Kidney (tissue), 22 donors: ENCODE measurements at regions of chr14 and their contacts with region 1.

Region 1: GRCh38 chr14:51776102-51776894 is 84.1 kb upstream of the GNG2 start:
- DNase-seq: peak in 4 of 5 donors; percentile 60 to 86 (median 73)
- H3K4me3 ChIP-seq: no peak overlapping the region
- H3K27ac ChIP-seq: no peak overlapping the region
- H3K4me1 ChIP-seq: no peaks in the 10 kb centered on the region
- H3K27me3 ChIP-seq: no peaks in the 10 kb centered on the region
- CTCF ChIP-seq: peak; percentile 47

Region 2: GRCh38 chr14:51283402-51284085 is 492.8 kb before region 1 on chr14:
- intact Hi-C with region 1: loop called (anchors 10 kb)
- DNase-seq: peak in 3 of 5 donors; percentile 18 to 94 (median 93)
- H3K4me3 ChIP-seq: no peak overlapping the region
- H3K27ac ChIP-seq: no peak overlapping the region
- H3K4me1 ChIP-seq: no peaks in the 10 kb centered on the region
- H3K27me3 ChIP-seq: no peaks in the 10 kb centered on the region
- CTCF ChIP-seq: peak; percentile 62

Region 3: GRCh38 chr14:51616724-51617409 is 159.4 kb before region 1 on chr14:
- intact Hi-C with region 1: no loop called
- DNase-seq: peak in 3 of 5 donors; percentile 17 to 64 (median 57)
- H3K4me3 ChIP-seq: no peak overlapping the region
- H3K27ac ChIP-seq: no peak overlapping the region
- H3K4me1 ChIP-seq: peaks cover 0 to 2% (median 0%) of the 10 kb centered on the region in 3 donors
- H3K27me3 ChIP-seq: no peaks in the 10 kb centered on the region
- CTCF ChIP-seq: no peak

Region 4: DNA sequence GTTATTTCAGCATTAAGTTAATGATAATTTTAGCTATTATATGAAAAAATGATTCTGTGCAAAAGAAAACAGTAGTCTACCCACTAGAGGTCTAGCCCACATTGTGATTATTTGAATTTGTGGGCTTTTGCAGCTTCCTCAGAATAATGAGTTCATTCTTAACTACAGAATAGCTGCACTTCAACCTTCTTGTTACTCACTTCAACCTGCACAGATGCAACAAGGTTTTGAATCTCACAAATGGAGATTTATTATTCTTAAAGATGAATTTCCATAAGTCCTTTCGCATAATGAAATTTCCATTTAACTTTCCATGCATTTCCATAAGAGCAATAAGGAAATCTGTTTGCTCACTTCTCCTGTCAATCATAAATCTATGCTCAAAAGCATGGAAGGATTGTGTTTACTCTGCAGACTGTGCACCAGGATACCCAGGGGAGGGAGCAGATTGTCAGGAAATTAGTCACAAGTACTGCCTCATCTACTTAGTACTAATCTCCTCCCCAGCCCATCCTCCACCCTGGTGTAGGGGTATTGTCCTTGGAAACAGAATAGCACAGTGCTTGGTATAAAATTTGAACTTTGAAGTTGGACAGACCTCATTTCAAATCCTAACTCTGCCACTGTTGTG is 561.9 kb after region 1 on chr14:
- intact Hi-C with region 1: no loop called
- DNase-seq: no peak
- H3K4me3 ChIP-seq: no peak overlapping the region
- H3K27ac ChIP-seq: no peak overlapping the region
- H3K4me1 ChIP-seq: peaks cover 0 to 5% (median 4%) of the 10 kb centered on the region in 3 donors
- H3K27me3 ChIP-seq: no peaks in the 10 kb centered on the region
- CTCF ChIP-seq: no peak